HEK293 (cell line): ENCODE measurements at regions of chr9 and their contacts with region 1.

Region 1: GRCh38 chr9:126690431-126691350 is 77.0 kb downstream of the LMX1B start:
- H3K4me3 ChIP-seq: no peak overlapping the region
- H3K27ac ChIP-seq: no peak overlapping the region
- H3K4me1 ChIP-seq: no peaks in the 10 kb centered on the region
- CTCF ChIP-seq: peak; percentile 60; the same call in 1 of the 2 replicates

Region 2: GRCh38 chr9:126604059-126605055 is 86.3 kb before region 1 on chr9:
- CTCF ChIA-PET with region 1: interaction called, 32 read pairs
- POLR2A ChIA-PET with region 1: no interaction called
- H3K4me3 ChIP-seq: no peak overlapping the region
- H3K27ac ChIP-seq: no peak overlapping the region
- H3K4me1 ChIP-seq: no peaks in the 10 kb centered on the region
- CTCF ChIP-seq: no peak

Region 3: DNA sequence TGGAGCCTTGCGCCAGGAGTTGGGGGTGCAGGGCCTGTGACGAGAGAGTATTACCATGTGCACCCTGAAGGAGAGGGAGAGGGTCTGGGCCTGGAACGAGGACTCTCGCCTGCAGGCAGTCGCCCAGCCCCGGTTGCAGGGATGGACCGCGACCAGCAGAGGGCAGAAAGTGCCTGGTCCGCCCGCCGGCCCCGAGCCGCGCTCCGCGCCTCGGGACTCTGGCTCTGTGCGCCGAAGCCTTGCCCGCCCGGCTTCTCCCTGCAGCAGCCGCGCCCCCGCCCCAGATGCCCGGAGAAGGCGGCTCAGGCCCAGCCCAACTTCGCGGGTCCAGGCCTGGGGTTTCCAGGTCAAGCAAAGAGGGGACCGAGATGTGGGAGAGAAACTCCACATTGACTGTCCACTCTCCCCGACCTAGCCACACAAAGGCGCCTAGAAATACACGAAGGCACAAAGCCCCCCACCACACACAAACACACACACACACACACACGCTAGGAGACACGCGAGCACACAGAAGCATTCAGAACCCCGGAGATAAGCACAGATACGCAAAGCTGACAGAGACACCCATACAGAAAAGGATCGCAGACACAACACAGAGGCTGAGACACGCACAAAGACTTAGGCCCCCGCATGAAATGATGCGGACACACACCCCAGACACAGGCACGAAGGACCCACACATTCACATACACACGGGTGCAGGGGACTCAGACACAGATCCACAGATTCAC is 78.9 kb before region 1 on chr9:
- CTCF ChIA-PET with region 1: interaction called, 32 read pairs
- POLR2A ChIA-PET with region 1: interaction called, 16 read pairs
- H3K4me3 ChIP-seq: peak overlapping the region; percentile 2
- H3K27ac ChIP-seq: peak overlapping the region; percentile 69
- H3K4me1 ChIP-seq: peaks cover 4% of the 10 kb centered on the region; the same call in 1 of the 2 replicates
- CTCF ChIP-seq: peak; percentile 74

Region 4: GRCh38 chr9:126635661-126636439 is 54.8 kb before region 1 on chr9:
- CTCF ChIA-PET with region 1: interaction called, 10 read pairs
- POLR2A ChIA-PET with region 1: no interaction called
- H3K4me3 ChIP-seq: no peak overlapping the region
- H3K27ac ChIP-seq: no peak overlapping the region
- H3K4me1 ChIP-seq: no peaks in the 10 kb centered on the region
- CTCF ChIP-seq: no peak

Region 5: DNA sequence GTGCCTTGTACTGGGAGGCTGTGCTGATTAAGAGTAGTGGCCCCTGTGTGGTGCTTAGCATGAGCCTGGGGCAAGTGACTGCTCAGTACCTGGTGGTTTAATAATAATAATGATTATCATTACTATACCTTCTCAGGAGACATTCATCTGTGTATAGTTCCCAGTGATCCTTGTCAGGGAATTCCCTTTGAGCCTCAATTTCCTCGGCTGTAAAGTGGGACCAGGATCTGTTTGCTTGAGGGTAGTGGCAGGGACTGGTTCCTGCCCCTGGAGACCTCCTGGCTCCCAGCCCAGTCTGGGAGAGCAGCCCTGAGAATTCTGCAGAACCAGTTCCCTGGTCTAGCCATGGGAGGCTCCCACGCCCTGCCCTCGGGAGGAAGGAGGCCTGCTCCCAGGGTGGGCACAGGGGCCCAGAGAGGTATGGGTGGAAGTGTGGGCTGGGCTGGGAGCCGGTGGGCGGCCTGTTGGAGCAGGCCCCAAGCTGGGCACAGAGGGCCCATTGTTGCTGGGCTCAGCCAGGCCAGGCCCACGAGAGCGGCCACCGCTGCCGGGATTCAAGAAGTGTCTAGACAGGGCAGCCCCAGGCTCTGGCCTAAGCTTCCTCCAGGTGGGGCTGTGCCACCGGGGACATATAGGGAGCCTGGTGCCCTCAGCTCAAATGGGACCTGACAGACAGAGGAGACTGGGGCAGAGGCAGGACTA is 28.3 kb before region 1 on chr9:
- CTCF ChIA-PET with region 1: interaction called, 10 read pairs
- POLR2A ChIA-PET with region 1: no interaction called
- H3K4me3 ChIP-seq: no peak overlapping the region
- H3K27ac ChIP-seq: no peak overlapping the region
- H3K4me1 ChIP-seq: peaks cover 2% of the 10 kb centered on the region
- CTCF ChIP-seq: 0 out of 2 replicates have a peak, but pooled peaks have one; percentile 16

Region 6: DNA sequence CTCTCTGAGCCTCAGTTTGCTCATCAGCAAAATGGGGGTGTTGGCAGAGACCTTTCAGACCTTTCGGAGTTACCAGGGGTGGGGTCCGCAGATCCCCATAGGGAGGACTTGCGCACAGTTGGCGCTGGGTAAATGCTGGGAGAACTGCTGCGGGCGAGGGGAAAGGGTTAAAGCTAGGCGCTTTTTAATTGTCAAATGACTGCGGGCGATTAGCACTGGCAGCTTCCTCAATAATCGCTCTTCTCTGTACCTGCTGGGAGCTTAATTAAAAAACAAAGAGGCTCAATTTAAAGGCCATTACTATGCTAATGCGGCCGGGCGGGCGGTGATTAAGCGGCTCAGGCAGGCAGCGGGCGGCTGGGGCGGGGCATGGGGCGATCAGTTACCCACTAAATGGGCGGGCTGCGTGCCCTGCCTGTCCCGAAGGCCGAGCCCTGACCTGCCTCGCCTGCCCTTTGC is 14.0 kb before region 1 on chr9:
- CTCF ChIA-PET with region 1: interaction called, 24 read pairs
- POLR2A ChIA-PET with region 1: no interaction called
- H3K4me3 ChIP-seq: no peak overlapping the region
- H3K27ac ChIP-seq: no peak overlapping the region
- H3K4me1 ChIP-seq: no peaks in the 10 kb centered on the region
- CTCF ChIP-seq: no peak

Region 7: DNA sequence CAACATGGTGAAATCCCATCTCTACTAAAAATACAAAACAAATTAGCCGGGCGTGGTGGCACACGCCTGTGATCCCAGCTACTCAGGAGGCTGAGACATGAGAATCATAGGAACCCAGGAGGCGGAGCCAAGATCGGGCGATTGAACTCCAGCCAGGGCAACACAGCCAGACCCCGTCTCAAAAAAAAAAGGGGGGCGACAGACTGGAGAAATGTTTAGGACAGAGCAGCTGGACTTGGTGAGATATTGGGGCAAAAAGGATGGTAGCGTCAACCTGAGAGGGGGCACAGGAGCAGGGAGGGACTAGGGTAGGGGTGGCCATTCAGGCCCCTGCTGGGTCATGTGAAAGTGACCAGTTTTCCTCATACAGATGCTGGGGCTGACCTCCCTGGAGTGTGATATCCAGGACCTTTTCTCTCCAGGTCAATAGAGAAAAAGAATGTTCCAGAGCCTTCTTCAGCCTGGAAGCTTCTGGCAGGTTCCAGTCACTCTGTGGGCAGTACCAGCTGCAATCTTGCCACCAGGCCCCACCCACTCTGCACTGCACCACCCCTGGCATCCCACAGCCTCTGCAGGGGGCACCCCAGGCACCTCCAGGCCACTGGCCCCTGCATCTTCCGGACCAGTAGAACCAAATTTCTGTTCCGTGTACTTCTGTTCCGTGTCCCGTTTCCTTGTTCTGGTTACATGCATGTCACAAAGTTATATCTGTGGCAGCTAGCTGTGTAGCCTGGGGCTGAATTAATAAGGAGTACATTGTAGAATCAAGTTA is 30.7 kb after region 1 on chr9:
- CTCF ChIA-PET with region 1: no interaction called
- POLR2A ChIA-PET with region 1: no interaction called
- H3K4me3 ChIP-seq: no peak overlapping the region
- H3K27ac ChIP-seq: no peak overlapping the region
- H3K4me1 ChIP-seq: peaks cover 9% of the 10 kb centered on the region
- CTCF ChIP-seq: no peak

Region 8: GRCh38 chr9:126781186-126782052 is 90.7 kb after region 1 on chr9:
- CTCF ChIA-PET with region 1: interaction called, 17 read pairs
- POLR2A ChIA-PET with region 1: no interaction called
- H3K4me3 ChIP-seq: no peak overlapping the region
- H3K27ac ChIP-seq: no peak overlapping the region
- H3K4me1 ChIP-seq: no peaks in the 10 kb centered on the region
- CTCF ChIP-seq: peak; percentile 72; the same call in 1 of the 2 replicates